A673 (cell line): ENCODE measurements at regions of chr13 and their contacts with region 1.

Region 1: GRCh38 chr13:36841391-36841790 is 22.4 kb downstream of the RFXAP start:
- DNase-seq: peak; percentile 85
- H3K4me3 ChIP-seq: no peak overlapping the region
- H3K27ac ChIP-seq: peak overlapping the region; percentile 82
- H3K4me1 ChIP-seq: peaks cover 61% of the 10 kb centered on the region
- H3K27me3 ChIP-seq: no peaks in the 10 kb centered on the region
- CTCF ChIP-seq: peak; percentile 48

Region 2: GRCh38 chr13:36297366-36298338 is 543.7 kb before region 1 on chr13 and contains the start of gene CCDC169:
- CTCF ChIA-PET with region 1: no interaction called
- POLR2A ChIA-PET with region 1: no interaction called
- intact Hi-C with region 1: loop called (anchors 5 kb)
- DNase-seq: peak; percentile 89
- H3K4me3 ChIP-seq: peak within 1 kb of the TSS; percentile 59
- H3K27ac ChIP-seq: peak within 1 kb of the TSS; percentile 86
- H3K4me1 ChIP-seq: peaks cover 16% of the 10 kb centered on the region
- H3K27me3 ChIP-seq: no peaks in the 10 kb centered on the region
- CTCF ChIP-seq: no peak
- total RNA-seq, gene CCDC169: 14.3 and 14.5 TPM in 2 replicates

Region 3: GRCh38 chr13:36453516-36453915 is 387.9 kb before region 1 on chr13:
- CTCF ChIA-PET with region 1: interaction called, 10 read pairs
- POLR2A ChIA-PET with region 1: no interaction called
- intact Hi-C with region 1: loop called (anchors 1 kb)
- DNase-seq: peak; percentile 72
- H3K4me3 ChIP-seq: no peak overlapping the region
- H3K27ac ChIP-seq: peak overlapping the region; percentile 74
- H3K4me1 ChIP-seq: peaks cover 35% of the 10 kb centered on the region
- H3K27me3 ChIP-seq: no peaks in the 10 kb centered on the region
- CTCF ChIP-seq: peak; percentile 71

Region 4: GRCh38 chr13:36673838-36674326 is 167.5 kb before region 1 on chr13 and contains the start of gene SERTM1:
- CTCF ChIA-PET with region 1: no interaction called
- POLR2A ChIA-PET with region 1: no interaction called
- intact Hi-C with region 1: loop called (anchors 5 kb)
- DNase-seq: peak; percentile 93
- H3K4me3 ChIP-seq: peak within 1 kb of the TSS; percentile 66
- H3K27ac ChIP-seq: peak within 1 kb of the TSS; percentile 75
- H3K4me1 ChIP-seq: peaks cover 15% of the 10 kb centered on the region
- H3K27me3 ChIP-seq: no peaks in the 10 kb centered on the region
- CTCF ChIP-seq: no peak
- total RNA-seq, gene SERTM1: 42.9 and 53.5 TPM in 2 replicates

Region 5: DNA sequence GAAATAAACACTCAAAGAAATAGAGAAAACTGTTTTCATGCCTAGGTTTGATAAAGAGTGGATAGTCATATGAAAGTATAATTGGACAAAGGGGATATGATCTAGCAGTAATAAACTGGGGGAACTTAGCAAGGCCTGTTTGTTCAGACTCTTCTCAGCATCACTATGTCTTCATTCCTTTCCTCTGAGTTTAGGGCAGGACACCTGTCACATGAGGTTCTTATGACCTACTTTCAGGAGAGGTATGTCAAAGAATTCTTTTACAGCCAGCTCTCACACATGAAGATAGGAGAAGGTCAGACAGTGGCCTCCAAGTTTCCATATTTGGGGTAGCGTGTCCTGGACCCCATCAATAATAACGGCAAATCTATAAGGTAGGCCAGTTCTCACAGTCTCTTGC is 33.8 kb before region 1 on chr13:
- CTCF ChIA-PET with region 1: no interaction called
- POLR2A ChIA-PET with region 1: no interaction called
- intact Hi-C with region 1: no loop called
- DNase-seq: no peak
- H3K4me3 ChIP-seq: no peak overlapping the region
- H3K27ac ChIP-seq: no peak overlapping the region
- H3K4me1 ChIP-seq: no peaks in the 10 kb centered on the region
- H3K27me3 ChIP-seq: no peaks in the 10 kb centered on the region
- CTCF ChIP-seq: no peak